ENCODE measurements at regions of chr9 and their contacts with region 1.

Region 1: GRCh38 chr9:115891929-115892328 is 261.7 kb upstream of the PAPPA start:
- DNase-seq: no peak
- ATAC-seq: no peak

Region 2: DNA sequence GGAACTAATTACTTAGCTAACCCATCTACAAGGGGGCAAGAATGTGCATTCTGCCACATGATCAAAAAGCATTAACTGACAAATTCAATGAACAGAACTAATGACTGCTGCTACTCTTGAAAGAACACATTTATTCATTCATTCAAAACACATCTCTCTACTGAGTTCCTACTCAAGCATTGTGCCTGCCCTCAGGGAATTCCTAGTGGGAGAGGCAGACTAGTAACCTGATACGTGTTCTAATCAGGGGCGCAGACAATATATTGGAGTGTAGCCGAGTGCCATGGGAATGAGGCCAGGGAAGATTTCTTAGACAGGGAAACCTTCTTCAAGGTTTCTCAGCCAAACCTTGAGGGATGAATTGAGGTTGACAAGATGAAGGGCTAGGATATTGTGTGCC is 204.9 kb after region 1 on chr9:
- intact Hi-C with region 1: no loop called
- DNase-seq: no peak
- ATAC-seq: no peak

Region 3: GRCh38 chr9:116899337-116900006 is 1007.5 kb after region 1 on chr9:
- intact Hi-C with region 1: loop called (anchors 10 kb)
- DNase-seq: no peak
- ATAC-seq: no peak

Measured in left ventricle myocardium superior (tissue), 1 donor.